ENCODE measurements at regions of chr16 and their contacts with region 1.

Region 1: GRCh38 chr16:89246903-89247733 is 29.6 kb downstream of the ZNF778 start:
- DNase-seq: peak; percentile 88
- H3K4me3 Mint-ChIP-seq: peak overlapping the region; percentile 66
- H3K27ac Mint-ChIP-seq: no peak overlapping the region
- H3K4me1 Mint-ChIP-seq: peaks cover 12% of the 10 kb centered on the region
- H3K27me3 Mint-ChIP-seq: peaks cover 2% of the 10 kb centered on the region

Region 2: GRCh38 chr16:88811769-88812512 is 435.2 kb before region 1 on chr16 and contains the start of gene APRT:
- intact Hi-C with region 1: loop called (anchors 1 kb)
- DNase-seq: peak; percentile 97
- H3K4me3 Mint-ChIP-seq: peak within 1 kb of the TSS; percentile 90
- H3K27ac Mint-ChIP-seq: peak within 1 kb of the TSS; percentile 98
- H3K4me1 Mint-ChIP-seq: peaks cover 11% of the 10 kb centered on the region
- H3K27me3 Mint-ChIP-seq: no peaks in the 10 kb centered on the region
- total RNA-seq, gene APRT: 301 and 303 TPM in 2 replicates

Region 3: DNA sequence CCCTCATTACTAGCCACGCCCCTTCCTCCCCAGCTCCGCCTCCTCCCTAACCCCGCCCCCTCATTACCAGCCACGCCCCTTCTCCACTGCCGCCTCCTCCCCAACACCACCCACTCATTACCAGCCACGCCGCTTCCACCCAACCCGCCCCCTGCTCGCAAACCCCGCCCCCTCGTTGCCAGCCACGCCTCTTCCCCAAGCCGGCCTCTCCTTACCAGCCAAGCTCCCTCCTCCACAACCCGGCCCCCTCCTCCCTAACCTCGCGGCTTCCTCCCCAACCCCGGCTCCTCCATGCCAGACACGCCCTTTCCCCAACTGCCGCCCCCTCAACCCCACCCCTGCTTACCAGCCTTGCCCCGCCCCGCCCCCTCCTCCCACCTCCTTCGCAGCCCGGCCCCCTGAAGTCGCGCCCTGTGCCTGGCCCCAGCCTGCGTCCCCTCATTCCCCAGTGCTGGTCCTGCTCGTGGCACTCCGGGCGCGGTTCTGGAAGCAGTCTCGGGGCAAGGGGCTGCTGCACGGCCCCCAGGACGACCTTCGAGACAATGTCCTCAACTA is 54.0 kb before region 1 on chr16:
- intact Hi-C with region 1: loop called (anchors 1 kb)
- DNase-seq: peak; percentile 48
- H3K4me3 Mint-ChIP-seq: no peak overlapping the region
- H3K27ac Mint-ChIP-seq: no peak overlapping the region
- H3K4me1 Mint-ChIP-seq: no peaks in the 10 kb centered on the region
- H3K27me3 Mint-ChIP-seq: no peaks in the 10 kb centered on the region

Region 4: DNA sequence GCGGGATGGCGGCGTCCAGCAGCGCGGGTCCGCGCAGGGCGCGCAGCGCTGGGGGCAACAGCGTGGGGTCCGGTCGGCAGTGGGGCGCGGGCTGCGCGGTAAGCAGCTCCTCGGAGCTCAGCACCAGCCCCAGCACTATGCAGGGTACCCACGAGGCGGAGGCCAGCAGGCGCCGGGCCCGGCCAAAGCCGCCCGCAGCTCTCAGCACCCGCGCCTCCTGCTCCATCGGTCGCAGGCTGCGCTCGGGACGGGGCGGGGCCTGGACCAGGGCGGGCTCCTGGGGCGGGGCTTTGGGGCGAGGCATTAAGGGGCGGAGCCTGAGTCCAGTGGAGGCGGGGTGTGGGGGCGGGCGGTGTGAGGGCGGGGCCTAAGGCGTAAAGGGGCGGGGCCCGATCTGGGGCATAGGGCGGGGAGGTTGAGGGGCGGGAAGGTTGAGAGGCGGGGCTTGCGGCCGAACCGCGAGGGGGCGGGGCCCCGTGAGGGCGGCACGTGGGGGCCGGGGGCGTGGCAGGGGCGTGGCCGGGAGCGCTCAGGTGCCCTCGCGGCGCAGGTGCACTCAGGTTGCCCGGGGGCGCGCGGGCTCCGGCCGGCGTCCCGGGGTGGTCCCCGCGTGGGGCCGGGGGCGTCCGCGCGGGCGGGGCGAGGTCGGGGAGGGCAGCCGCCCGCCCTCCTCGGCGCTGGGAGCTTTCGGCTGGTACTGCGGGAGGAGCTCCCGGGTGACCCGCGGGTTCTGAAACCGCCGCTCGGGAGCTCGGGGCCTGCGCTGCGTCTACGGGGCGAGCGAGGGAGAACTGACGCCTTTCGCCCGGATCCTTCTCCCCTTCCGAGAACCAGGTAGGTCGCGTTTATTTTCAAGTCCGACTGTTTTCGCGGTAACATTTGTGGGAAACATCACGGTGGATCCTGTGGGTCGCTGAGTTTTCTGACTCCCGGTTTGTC is 45.4 kb before region 1 on chr16:
- intact Hi-C with region 1: loop called (anchors 2 kb)
- DNase-seq: peak; percentile 74
- H3K4me3 Mint-ChIP-seq: peak overlapping the region; percentile 59
- H3K27ac Mint-ChIP-seq: no peak overlapping the region
- H3K4me1 Mint-ChIP-seq: no peaks in the 10 kb centered on the region
- H3K27me3 Mint-ChIP-seq: peaks cover 40% of the 10 kb centered on the region

Measured in activated T-helper 1 cell treated with anti-CD3 and anti-CD28 coated beads, Interleukin-12 subunit alpha, Interleukin-12 subunit beta, Interleukin-2, Interleukin-4 antibody, amounts not matched to agents 30 ng/mL and 10 ng/mL and 1 ng/mL, durations not matched to agents 14 hours and 24 hours and 36 hours (primary cell).